CD8-positive, alpha-beta T cell (primary cell): ENCODE measurements at regions of chr1 and their contacts with region 1.

Region 1: GRCh38 chr1:150561974-150562445 is 12.8 kb downstream of the ADAMTSL4 start:
- DNase-seq: peak; percentile 60 to 90 (median 83)
- ATAC-seq: peak; percentile 38
- H3K4me3 ChIP-seq: peak overlapping the region; percentile 82 to 89
- H3K4me3 Mint-ChIP-seq: peak overlapping the region; percentile 95
- H3K27ac ChIP-seq: peak overlapping the region; percentile 90 to 94
- H3K27ac Mint-ChIP-seq: peak overlapping the region; percentile 100
- H3K4me1 ChIP-seq: peaks cover 61% of the 10 kb centered on the region
- H3K4me1 Mint-ChIP-seq: peaks cover 56% of the 10 kb centered on the region
- H3K27me3 ChIP-seq: no peaks in the 10 kb centered on the region
- H3K27me3 Mint-ChIP-seq: no peaks in the 10 kb centered on the region
- CTCF ChIP-seq: no peak

Region 2: DNA sequence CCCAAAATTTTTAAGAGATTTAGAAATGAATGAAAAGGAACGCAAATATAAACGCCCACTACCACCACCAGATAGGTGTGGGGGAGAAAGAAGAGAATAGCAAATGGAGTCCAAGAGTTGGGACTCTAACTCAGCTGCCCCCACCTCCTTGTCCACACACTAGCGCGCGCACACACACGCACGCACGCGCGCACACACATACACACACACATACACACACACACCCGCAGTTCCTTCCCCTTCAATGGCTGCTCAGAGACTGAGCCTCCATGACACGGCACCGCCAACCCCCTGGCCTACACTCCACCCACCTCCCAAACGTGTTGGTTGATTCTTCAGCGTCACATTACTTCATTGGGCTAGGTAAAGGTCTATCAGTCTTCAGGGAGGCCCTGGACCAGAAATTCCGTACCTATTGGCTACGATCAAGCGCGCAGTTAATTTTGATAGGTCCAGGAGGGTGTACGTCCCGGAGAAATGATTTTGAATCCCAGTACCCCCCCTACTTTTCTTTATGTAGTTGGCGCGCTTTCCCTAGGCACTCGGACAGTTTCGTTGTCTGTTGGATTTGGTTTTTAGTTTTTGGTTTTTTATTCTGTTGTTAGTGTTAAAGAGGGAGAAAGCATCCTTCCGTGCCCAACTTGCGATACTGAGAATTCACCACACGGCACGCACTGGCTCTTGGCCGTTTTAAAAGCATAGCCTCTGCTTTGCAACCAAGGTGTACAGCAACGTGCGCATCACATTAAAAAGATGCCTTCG is 326.0 kb before region 1 on chr1 and contains the start of gene ANP32E:
- CTCF ChIA-PET with region 1: no interaction called
- POLR2A ChIA-PET with region 1: interaction called, 4 read pairs
- intact Hi-C with region 1: loop called in 1 of 2 experiments (anchors 10 kb)
- DNase-seq: peak; percentile 86 to 99 (median 94)
- ATAC-seq: peak; percentile 90
- H3K4me3 ChIP-seq: peak within 1 kb of the TSS; percentile 72 to 80
- H3K4me3 Mint-ChIP-seq: no peak within 1 kb of the TSS
- H3K27ac ChIP-seq: peak within 1 kb of the TSS; percentile 89 to 96
- H3K27ac Mint-ChIP-seq: peak within 1 kb of the TSS; percentile 93
- H3K4me1 ChIP-seq: peaks cover 12% of the 10 kb centered on the region
- H3K4me1 Mint-ChIP-seq: peaks cover 18% of the 10 kb centered on the region
- H3K27me3 ChIP-seq: no peaks in the 10 kb centered on the region
- H3K27me3 Mint-ChIP-seq: no peaks in the 10 kb centered on the region
- CTCF ChIP-seq: no peak
- total RNA-seq, gene ANP32E: 30.6 to 35.0 TPM

Region 3: DNA sequence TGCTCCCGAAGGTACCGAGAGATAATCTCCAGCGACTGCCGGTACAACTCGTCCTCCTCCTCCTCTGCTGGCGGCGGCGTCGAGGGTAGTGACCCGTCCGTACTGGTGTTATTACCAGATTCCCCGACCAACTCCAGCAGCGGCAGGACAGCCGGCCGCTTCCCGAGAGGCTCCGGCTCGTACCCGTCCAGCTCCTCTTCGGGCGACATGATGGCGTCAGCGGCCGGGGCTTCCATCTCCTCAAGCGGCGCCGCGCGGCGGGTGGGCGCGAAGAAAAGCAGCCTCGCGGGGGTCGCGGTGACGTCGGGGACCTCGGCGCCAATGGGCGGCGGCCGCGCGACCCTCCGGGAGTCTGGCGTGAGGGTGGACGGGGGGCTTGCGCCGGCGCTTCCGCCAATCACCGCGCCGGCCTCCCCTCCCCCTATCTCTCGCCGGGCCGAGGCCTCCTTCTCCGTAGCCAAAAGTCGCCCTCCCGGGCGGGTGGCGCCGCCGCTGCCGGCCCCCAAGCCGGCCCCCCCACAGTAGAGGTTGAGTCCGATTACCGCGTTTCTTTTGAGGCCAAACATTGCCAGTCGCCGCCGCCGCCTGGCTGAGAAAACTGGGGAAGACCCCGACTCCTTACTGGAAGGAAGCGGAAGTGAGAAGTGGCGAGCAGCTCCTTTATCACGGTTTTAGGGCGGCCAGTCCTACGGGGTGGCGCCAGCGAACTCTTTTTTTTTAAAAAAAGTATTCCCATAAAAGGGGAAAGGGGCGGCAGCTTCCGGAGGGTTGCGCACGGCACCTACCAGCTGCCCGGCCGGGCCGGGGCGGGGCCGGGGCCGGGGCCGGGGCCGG is 17.2 kb after region 1 on chr1 and contains the start of gene MCL1:
- CTCF ChIA-PET with region 1: interaction called, 349 read pairs
- POLR2A ChIA-PET with region 1: interaction called, 584 read pairs
- intact Hi-C with region 1: loop called (anchors 1 kb)
- DNase-seq: peak; percentile 66 to 94 (median 88)
- ATAC-seq: peak; percentile 69
- H3K4me3 ChIP-seq: peak within 1 kb of the TSS; percentile 88 to 94
- H3K4me3 Mint-ChIP-seq: peak within 1 kb of the TSS; percentile 96
- H3K27ac ChIP-seq: peak within 1 kb of the TSS; percentile 90 to 97
- H3K27ac Mint-ChIP-seq: peak within 1 kb of the TSS; percentile 98
- H3K4me1 ChIP-seq: peaks cover 7% of the 10 kb centered on the region
- H3K4me1 Mint-ChIP-seq: peaks cover 37% of the 10 kb centered on the region
- H3K27me3 ChIP-seq: no peaks in the 10 kb centered on the region
- H3K27me3 Mint-ChIP-seq: no peaks in the 10 kb centered on the region
- CTCF ChIP-seq: no peak
- total RNA-seq, gene MCL1: 682 to 685 TPM

Region 4: GRCh38 chr1:150621497-150622302 is 59.7 kb after region 1 on chr1:
- CTCF ChIA-PET with region 1: interaction called, 799 read pairs
- POLR2A ChIA-PET with region 1: interaction called, 82 read pairs
- intact Hi-C with region 1: loop called (anchors 1 kb)
- DNase-seq: peak in 8 of 9 experiments; percentile 23 to 84 (median 68)
- ATAC-seq: peak; percentile 80
- H3K4me3 ChIP-seq: no peak overlapping the region
- H3K4me3 Mint-ChIP-seq: no peak overlapping the region
- H3K27ac ChIP-seq: peak overlapping the region in 1 of 2 experiments; percentile 62
- H3K27ac Mint-ChIP-seq: peak overlapping the region; percentile 80
- H3K4me1 ChIP-seq: peaks cover 19% of the 10 kb centered on the region
- H3K4me1 Mint-ChIP-seq: peaks cover 34% of the 10 kb centered on the region
- H3K27me3 ChIP-seq: no peaks in the 10 kb centered on the region
- H3K27me3 Mint-ChIP-seq: no peaks in the 10 kb centered on the region
- CTCF ChIP-seq: peak; percentile 74

Region 5: GRCh38 chr1:150765296-150765976 is 203.4 kb after region 1 on chr1 and contains the start of gene CTSS:
- CTCF ChIA-PET with region 1: no interaction called
- POLR2A ChIA-PET with region 1: no interaction called
- intact Hi-C with region 1: loop called in 1 of 2 experiments (anchors 5 kb)
- DNase-seq: peak in 2 of 9 experiments; percentile 39 to 66
- ATAC-seq: peak; percentile 64
- H3K4me3 ChIP-seq: peak within 1 kb of the TSS; percentile 47 to 69
- H3K4me3 Mint-ChIP-seq: peak within 1 kb of the TSS; percentile 94
- H3K27ac ChIP-seq: peak within 1 kb of the TSS; percentile 67 to 75
- H3K27ac Mint-ChIP-seq: peak within 1 kb of the TSS; percentile 95
- H3K4me1 ChIP-seq: peaks cover 25% of the 10 kb centered on the region
- H3K4me1 Mint-ChIP-seq: peaks cover 42% of the 10 kb centered on the region
- H3K27me3 ChIP-seq: no peaks in the 10 kb centered on the region
- H3K27me3 Mint-ChIP-seq: no peaks in the 10 kb centered on the region
- CTCF ChIP-seq: no peak
- total RNA-seq, gene CTSS: 58.3 to 63.0 TPM

Region 6: DNA sequence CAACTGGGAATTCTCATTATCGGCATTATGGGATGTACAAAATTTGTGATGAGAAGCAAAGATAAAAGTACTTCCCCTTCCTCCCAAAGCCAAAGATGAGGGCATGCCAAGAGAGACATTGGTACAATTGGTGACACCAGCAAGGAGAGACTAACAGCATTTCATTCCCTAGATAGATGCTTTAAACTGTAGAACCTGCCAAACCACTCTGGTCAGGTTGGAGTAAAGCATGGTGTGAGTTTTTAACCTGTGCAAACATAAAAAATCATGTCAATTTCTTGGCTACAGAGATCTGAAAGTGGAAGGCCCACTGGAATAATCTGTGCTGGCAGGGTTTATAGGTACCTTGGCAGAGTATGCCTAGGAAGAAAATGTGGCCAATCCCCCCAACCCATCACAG is 344.3 kb after region 1 on chr1:
- CTCF ChIA-PET with region 1: no interaction called
- POLR2A ChIA-PET with region 1: no interaction called
- intact Hi-C with region 1: no loop called
- DNase-seq: no peak
- ATAC-seq: no peak
- H3K4me3 ChIP-seq: no peak overlapping the region
- H3K4me3 Mint-ChIP-seq: no peak overlapping the region
- H3K27ac ChIP-seq: no peak overlapping the region
- H3K27ac Mint-ChIP-seq: no peak overlapping the region
- H3K4me1 ChIP-seq: no peaks in the 10 kb centered on the region
- H3K4me1 Mint-ChIP-seq: no peaks in the 10 kb centered on the region
- H3K27me3 ChIP-seq: no peaks in the 10 kb centered on the region
- H3K27me3 Mint-ChIP-seq: no peaks in the 10 kb centered on the region
- CTCF ChIP-seq: no peak